Mammary epithelial cell (primary cell): ENCODE measurements at regions of chr5 and their contacts with region 1.

Region 1: GRCh38 chr5:149944666-149945065 is at the start of gene PDE6A:
- DNase-seq: no peak
- H3K4me3 ChIP-seq: no peak within 1 kb of the TSS
- H3K27ac ChIP-seq: no peak within 1 kb of the TSS
- H3K4me1 ChIP-seq: peaks cover 20% of the 10 kb centered on the region
- H3K27me3 ChIP-seq: no peaks in the 10 kb centered on the region
- CTCF ChIP-seq: no peak
- total RNA-seq, gene PDE6A: 0.07 to 0.17 TPM

Region 2: DNA sequence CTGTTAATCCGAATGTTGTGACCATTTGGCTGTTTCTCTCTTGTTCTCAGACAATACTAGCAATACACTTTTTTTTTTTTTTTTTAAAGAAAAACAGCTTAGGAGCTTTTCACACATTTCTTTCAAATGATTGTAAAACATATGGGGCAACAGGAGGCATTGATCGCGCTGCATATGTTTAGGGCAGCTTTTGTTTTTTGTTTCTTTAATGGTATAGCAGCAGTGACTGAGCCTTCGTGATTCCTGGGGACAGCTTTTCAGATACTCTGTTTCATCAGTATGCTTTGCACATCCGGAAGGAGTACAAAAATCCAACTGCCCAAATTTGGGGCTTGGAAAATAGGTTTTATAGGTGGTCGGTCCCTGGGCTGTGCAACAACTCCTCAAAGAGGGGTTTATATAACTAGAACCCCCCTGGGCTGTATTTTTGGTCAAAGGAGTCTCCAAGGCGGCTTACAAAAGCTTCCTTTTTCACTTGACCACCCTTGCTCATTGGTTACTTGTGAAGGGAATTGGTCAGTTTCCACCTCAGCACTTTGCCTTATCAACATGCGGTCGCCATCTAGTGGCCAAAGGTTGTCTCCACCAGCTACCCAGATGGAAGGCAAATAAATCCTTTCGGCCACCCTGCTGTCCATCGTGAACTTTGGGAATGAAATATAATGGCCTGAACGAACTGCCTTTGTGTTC is 91.9 kb before region 1 on chr5:
- CTCF ChIA-PET with region 1: no interaction called
- dilution Hi-C with region 1: loop called (anchors 5 kb)
- in situ Hi-C with region 1: no loop called
- intact Hi-C with region 1: no loop called
- DNase-seq: peak; percentile 49
- H3K4me3 ChIP-seq: no peak overlapping the region
- H3K27ac ChIP-seq: no peak overlapping the region
- H3K4me1 ChIP-seq: peaks cover 10% of the 10 kb centered on the region
- H3K27me3 ChIP-seq: no peaks in the 10 kb centered on the region
- CTCF ChIP-seq: peak; percentile 91 to 97

Region 3: GRCh38 chr5:149895416-149896345 is 49.0 kb before region 1 on chr5:
- CTCF ChIA-PET with region 1: no interaction called
- dilution Hi-C with region 1: loop called (anchors 5 kb)
- in situ Hi-C with region 1: no loop called
- intact Hi-C with region 1: no loop called
- DNase-seq: peak; percentile 78
- H3K4me3 ChIP-seq: peak overlapping the region in 1 of 3 experiments; percentile 16
- H3K27ac ChIP-seq: peak overlapping the region; percentile 89
- H3K4me1 ChIP-seq: peaks cover 37% of the 10 kb centered on the region
- H3K27me3 ChIP-seq: no peaks in the 10 kb centered on the region
- CTCF ChIP-seq: no peak